Left ventricle myocardium superior (tissue), 1 donor: ENCODE measurements at regions of chr17 and their contacts with region 1.

Region 1: DNA sequence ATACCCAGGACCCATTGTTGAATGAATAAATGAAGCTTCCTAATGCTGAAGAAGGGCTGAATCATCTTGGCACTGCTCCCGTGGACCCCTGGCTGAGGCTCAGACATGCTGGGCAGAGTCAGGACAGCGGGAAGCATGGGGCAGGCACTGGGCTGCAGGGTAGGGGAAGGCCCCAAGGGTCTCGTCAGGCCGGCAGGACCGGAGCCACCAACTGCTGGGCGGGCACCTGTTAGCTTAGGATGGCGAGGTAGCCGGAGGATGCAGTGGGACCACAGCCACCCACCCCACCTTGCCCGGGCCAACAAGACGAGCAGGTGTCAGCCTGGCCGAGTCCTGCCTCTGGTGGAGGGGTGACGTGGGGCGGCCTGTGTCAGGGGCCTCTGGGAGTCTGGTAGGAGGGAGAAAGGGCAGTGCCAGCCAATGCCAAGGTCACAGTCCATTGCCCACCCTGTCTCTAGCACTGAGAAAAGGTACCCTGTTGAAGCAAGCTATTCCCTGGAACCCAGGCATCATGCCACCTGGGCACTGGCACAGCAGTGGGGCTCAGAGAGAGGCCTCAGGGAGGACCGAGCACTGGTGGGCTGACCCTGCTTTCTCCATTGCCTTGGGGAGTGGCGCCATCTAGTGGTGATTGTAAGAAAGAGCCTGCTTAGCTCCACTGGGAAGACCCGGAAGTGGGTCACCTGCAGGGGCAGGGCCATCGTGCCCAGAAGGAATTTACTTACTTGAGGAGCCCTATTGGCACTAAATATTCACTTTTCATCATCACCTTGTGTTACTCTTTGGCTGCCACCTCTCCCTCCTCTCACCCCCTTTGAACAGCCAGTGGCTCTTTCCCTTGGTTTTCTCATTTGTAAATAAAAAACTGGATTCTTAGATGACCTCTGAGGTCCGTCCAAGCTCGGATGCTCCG is 3.0 kb upstream of the DLX3 start:
- DNase-seq: peak; percentile 66
- ATAC-seq: peak; percentile 78

Region 2: DNA sequence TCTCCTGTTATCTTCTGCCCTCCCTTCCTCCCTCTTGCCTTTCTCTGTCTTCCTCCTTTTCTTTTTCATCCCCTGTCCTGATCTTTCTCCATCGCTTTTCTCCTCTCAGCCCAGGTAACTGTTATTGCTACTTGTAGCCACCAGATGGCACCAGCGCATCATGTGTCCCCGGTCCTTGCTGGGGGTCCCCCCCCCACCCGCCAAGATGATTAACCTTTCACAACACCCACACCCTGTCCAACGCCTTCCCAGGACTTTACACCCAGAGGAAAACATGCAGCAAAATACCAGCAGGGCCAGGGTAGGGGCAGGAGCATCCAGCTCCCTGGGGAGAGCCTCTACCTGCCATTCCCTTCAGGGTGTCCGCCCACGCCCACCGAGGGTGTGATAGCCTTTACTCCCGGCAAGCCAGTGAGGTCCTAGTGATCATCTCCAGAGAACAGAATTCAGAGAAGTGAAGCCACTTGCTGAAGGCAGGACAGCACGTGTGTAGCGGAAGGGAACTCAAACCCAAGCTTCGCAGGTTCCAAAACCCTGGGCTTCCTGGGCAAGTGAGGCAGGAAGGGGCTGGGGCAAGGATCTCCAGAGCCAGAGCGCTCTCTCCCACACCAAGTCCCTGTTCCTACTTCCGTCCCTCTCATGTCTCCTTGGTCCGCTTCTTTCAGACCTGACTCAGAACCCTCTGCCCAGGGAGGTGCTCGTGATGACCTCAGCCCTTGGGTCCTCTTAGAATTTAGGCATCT is 136.7 kb before region 1 on chr17:
- intact Hi-C with region 1: loop called (anchors 5 kb)
- DNase-seq: peak; percentile 49
- ATAC-seq: peak; percentile 49

Region 3: GRCh38 chr17:49875685-49876084 is 122.4 kb before region 1 on chr17:
- intact Hi-C with region 1: loop called (anchors 5 kb)
- DNase-seq: no peak
- ATAC-seq: no peak

Region 4: DNA sequence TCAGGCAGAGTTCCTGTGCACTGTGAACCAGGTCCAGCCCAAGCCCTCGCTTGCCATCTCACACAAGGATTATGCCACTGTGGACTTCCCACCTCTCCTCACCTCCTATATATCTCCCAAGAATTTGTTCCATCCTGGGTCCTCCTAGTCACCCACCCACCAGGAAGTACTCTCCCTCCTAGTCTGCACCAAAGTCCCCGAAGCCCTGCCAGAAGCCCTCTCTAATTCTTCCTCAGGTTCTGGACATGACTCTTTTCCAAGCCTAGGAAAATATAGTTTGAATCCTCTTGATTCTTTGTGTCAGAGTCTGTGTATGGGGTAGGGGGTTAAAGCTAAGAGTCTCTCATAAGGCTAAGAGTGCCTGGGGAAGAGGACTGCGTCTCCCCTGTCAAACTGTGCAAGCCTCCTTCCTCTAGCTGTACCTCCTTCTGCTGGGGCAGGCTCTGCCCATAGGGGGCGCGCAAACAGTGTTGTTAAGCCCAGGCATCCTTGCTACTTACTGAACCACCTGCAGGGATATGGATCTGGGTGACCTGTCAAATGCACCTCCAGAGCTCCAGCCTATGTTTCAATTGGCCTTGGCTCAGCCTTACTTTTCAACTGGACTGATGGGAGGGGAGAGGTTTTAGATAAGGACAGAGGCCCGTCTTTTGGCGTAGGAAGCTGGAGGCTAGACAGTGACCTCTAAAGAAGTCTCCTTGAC is 45.7 kb before region 1 on chr17:
- intact Hi-C with region 1: no loop called
- DNase-seq: peak; percentile 86
- ATAC-seq: peak; percentile 84

Region 5: GRCh38 chr17:50194934-50195865 is 197.2 kb after region 1 on chr17:
- intact Hi-C with region 1: no loop called
- DNase-seq: peak; percentile 22
- ATAC-seq: no peak